Mucosa of descending colon (tissue), 3 donors: ENCODE measurements at regions of chr1 and their contacts with region 1.

Region 1: GRCh38 chr1:17606826-17607440 is 67.4 kb downstream of the ARHGEF10L start:
- DNase-seq: peak in 2 of 3 donors; percentile 79 to 84
- ATAC-seq: peak; percentile 55
- H3K4me3 ChIP-seq: no peak overlapping the region
- H3K4me1 ChIP-seq: peaks cover 10% of the 10 kb centered on the region
- CTCF ChIP-seq: peak; percentile 83

Region 2: GRCh38 chr1:17502326-17502778 is 104.6 kb before region 1 on chr1:
- intact Hi-C with region 1: loop called (anchors 2 to 5 kb)
- DNase-seq: peak; percentile 90 to 94 (median 93)
- ATAC-seq: peak; percentile 95
- H3K4me3 ChIP-seq: no peak overlapping the region
- H3K4me1 ChIP-seq: peaks cover 12% of the 10 kb centered on the region
- CTCF ChIP-seq: peak; percentile 75

Region 3: DNA sequence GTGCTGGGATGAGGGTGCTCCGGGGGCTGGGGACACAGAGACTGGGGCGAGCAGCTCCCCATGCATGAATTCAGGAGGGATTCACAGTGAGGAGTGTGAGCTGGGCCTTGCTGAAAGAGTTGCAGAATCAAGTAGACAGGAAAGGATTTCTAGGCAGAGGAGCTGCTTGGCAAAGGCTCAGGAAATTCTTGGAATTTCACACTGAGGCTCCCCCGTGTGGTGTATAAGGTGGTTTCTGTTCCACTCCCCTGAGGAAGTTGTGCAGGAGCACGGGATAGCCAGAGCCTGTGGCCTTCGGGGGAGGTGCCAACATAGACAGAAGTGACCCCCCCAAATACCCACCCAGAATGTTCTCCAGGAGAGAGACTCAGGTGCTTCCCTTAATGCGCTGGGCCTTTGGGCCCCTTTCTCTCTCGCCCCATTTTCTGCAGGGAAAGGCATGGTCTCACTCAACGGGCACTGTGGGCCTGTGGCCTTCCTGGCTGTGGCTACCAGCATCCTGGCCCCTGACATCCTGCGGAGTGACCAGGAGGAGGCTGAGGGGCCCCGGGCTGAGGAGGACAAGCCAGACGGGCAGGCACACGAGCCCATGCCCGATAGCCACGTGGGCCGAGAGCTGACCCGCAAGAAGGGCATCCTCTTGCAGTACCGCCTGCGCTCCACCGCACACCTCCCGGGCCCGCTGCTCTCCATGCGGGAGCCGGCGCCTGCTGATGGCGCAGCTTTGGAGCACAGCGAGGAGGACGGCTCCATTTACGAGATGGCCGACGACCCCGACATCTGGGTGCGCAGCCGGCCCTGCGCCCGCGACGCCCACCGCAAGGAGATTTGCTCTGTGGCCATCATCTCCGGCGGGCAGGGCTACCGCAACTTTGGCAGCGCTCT is 89.7 kb after region 1 on chr1:
- intact Hi-C with region 1: no loop called
- DNase-seq: no peak
- ATAC-seq: peak; percentile 5
- H3K4me3 ChIP-seq: no peak overlapping the region
- H3K4me1 ChIP-seq: no peaks in the 10 kb centered on the region
- CTCF ChIP-seq: no peak

Region 4: GRCh38 chr1:18693256-18694098 is 1086.5 kb after region 1 on chr1:
- intact Hi-C with region 1: no loop called
- DNase-seq: no peak
- ATAC-seq: no peak
- H3K4me3 ChIP-seq: no peak overlapping the region
- H3K4me1 ChIP-seq: no peaks in the 10 kb centered on the region
- CTCF ChIP-seq: no peak